Naive thymus-derived CD4-positive, alpha-beta T cell (primary cell): ENCODE measurements at regions of chr7 and their contacts with region 1.

Region 1: GRCh38 chr7:130668257-130669084 is at the start of gene COPG2:
- DNase-seq: peak; percentile 26 to 90 (median 46)
- ATAC-seq: peak; percentile 93
- H3K4me3 ChIP-seq: peak within 1 kb of the TSS; percentile 64
- H3K4me3 Mint-ChIP-seq: peak within 1 kb of the TSS; percentile 85 to 95 (median 90)
- H3K27ac ChIP-seq: peak within 1 kb of the TSS; percentile 73
- H3K27ac Mint-ChIP-seq: peak within 1 kb of the TSS; percentile 38 to 93 (median 81)
- H3K4me1 ChIP-seq: no peaks in the 10 kb centered on the region
- H3K4me1 Mint-ChIP-seq: peaks cover 6 to 23% (median 21%) of the 10 kb centered on the region in 7 donors
- H3K27me3 ChIP-seq: no peaks in the 10 kb centered on the region
- H3K27me3 Mint-ChIP-seq: peaks cover 0 to 11% (median 0%) of the 10 kb centered on the region in 5 donors
- total RNA-seq, gene COPG2: 8.1 to 12.4 (median 9.4) TPM

Region 2: GRCh38 chr7:130050773-130051125 is 617.7 kb before region 1 on chr7:
- CTCF ChIA-PET with region 1: no interaction called
- POLR2A ChIA-PET with region 1: no interaction called
- intact Hi-C with region 1: loop called in 1 of 2 experiments (anchors 5 kb)
- DNase-seq: no peak
- ATAC-seq: no peak
- H3K4me3 ChIP-seq: peak overlapping the region; percentile 86
- H3K4me3 Mint-ChIP-seq: peak overlapping the region; percentile 94 to 99 (median 98)
- H3K27ac ChIP-seq: peak overlapping the region; percentile 78
- H3K27ac Mint-ChIP-seq: peak overlapping the region; percentile 90 to 99 (median 95)
- H3K4me1 ChIP-seq: peaks cover 5 to 8% of the 10 kb centered on the region in 2 donors
- H3K4me1 Mint-ChIP-seq: peaks cover 6 to 29% (median 14%) of the 10 kb centered on the region in 7 donors
- H3K27me3 ChIP-seq: no peaks in the 10 kb centered on the region
- H3K27me3 Mint-ChIP-seq: peaks cover 0 to 3% (median 0%) of the 10 kb centered on the region in 5 donors

Region 3: DNA sequence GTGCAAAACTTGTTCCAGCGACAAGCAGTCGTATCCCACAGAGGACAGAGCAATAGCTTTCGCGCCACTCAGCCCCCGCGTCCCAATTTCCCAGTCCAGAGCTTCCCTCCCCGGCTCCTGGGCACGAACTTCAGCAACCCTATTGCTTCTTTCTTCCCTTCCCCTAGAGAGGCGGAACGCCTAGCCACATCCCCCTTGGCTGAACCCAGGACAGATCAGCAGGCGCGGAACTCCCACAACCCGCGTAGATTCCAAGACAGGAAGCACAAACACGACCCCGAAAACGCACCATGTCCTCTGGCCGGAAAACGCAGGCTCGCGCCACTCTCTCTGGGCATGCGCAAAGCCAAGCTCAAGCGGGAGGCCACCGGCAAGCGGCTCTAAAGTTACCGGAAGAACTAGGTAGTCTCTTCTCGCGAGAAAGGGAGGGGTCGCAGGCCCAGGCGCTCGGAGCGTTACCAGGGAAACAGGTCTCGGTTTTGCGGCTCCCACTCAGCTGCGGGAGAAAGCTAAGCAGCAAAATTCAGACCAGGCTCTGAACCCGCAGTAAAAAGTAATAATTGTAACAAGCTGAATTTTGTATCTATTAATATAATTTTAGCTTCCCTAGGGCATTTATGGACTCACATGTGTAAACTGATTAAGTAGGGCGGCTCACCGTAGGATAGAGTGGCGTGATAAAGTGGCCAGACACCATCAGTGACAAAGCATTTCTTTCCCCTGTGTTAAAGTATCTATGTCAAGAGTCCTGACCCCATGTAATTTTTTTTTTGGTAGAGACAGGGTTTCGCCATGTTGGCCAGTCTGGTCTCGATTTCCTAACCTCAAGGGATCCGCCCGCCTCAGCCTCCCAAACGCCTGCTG is 463.2 kb before region 1 on chr7 and contains the start of gene TMEM209:
- CTCF ChIA-PET with region 1: no interaction called
- POLR2A ChIA-PET with region 1: no interaction called
- intact Hi-C with region 1: loop called (anchors 1 kb)
- DNase-seq: peak; percentile 80 to 96 (median 93)
- ATAC-seq: peak; percentile 98
- H3K4me3 ChIP-seq: peak within 1 kb of the TSS; percentile 89
- H3K4me3 Mint-ChIP-seq: peak within 1 kb of the TSS; percentile 98 to 100 (median 100)
- H3K27ac ChIP-seq: peak within 1 kb of the TSS; percentile 83
- H3K27ac Mint-ChIP-seq: peak within 1 kb of the TSS; percentile 97 to 100 (median 99)
- H3K4me1 ChIP-seq: peaks cover 11 to 14% of the 10 kb centered on the region in 2 donors
- H3K4me1 Mint-ChIP-seq: peaks cover 13 to 43% (median 37%) of the 10 kb centered on the region in 7 donors
- H3K27me3 ChIP-seq: no peaks in the 10 kb centered on the region
- H3K27me3 Mint-ChIP-seq: peaks cover 0 to 9% (median 0%) of the 10 kb centered on the region in 5 donors
- total RNA-seq, gene TMEM209: 18.8 to 37.3 (median 35.1) TPM

Region 4: DNA sequence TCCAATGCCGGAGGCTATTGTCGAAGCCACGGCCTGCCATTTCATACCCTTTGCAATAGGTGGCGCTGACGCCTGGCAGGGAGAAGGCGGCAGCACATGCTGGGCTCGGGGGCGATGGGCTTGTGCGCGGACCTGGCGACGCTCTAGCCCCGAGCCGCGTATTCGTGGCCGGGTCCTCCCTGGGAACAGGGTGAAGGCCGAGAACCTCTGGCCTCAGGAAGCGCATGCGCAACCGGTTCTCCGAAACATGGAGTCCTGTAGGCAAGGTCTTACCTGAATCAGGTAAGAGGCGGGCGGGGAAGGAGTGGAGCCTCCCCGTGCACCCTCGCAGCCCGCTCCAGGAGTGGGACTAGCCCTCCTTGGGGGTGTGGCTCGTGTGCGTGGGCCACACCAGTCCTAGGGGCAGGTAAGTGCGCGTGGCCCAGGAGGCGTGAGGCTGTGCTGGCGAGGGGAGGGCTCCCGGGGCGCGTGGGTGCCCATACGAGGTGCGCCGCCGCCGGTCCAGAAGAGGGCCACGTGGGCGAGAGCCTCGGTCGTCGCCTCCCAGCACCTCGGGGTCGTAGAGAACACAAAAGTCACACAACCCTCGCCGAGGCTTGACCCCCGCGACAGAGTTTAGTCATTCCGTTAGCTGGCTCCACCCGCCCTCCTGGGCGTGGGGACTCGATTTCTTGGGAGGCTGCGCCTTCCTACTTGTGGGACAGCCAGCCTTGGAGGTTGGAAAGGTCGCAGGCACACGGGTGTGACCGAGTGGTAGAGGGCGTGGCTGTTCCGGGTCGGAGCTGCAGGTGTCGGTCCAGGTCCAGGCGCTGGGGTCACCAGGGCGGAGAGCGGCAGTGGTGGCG is 182.1 kb before region 1 on chr7:
- CTCF ChIA-PET with region 1: no interaction called
- POLR2A ChIA-PET with region 1: no interaction called
- intact Hi-C with region 1: loop called in 1 of 2 experiments (anchors 2 kb)
- DNase-seq: peak; percentile 34 to 73 (median 56)
- ATAC-seq: peak; percentile 88
- H3K4me3 ChIP-seq: peak overlapping the region; percentile 80
- H3K4me3 Mint-ChIP-seq: peak overlapping the region; percentile 85 to 94 (median 91)
- H3K27ac ChIP-seq: peak overlapping the region; percentile 41
- H3K27ac Mint-ChIP-seq: peak overlapping the region in 5 of 9 donors; percentile 58 to 88 (median 73)
- H3K4me1 ChIP-seq: peaks cover 7 to 9% of the 10 kb centered on the region in 2 donors
- H3K4me1 Mint-ChIP-seq: peaks cover 22 to 32% (median 25%) of the 10 kb centered on the region in 7 donors
- H3K27me3 ChIP-seq: no peaks in the 10 kb centered on the region
- H3K27me3 Mint-ChIP-seq: peaks cover 5 to 66% (median 31%) of the 10 kb centered on the region in 5 donors